Activated CD4-positive, alpha-beta T cell treated with anti-CD3 and anti-CD28 coated beads, Interleukin-2, amount 10 ng/mL, durations not matched to agents 7 days and 5 days (primary cell): ENCODE measurements at regions of chr4 and their contacts with region 1.

Region 1: DNA sequence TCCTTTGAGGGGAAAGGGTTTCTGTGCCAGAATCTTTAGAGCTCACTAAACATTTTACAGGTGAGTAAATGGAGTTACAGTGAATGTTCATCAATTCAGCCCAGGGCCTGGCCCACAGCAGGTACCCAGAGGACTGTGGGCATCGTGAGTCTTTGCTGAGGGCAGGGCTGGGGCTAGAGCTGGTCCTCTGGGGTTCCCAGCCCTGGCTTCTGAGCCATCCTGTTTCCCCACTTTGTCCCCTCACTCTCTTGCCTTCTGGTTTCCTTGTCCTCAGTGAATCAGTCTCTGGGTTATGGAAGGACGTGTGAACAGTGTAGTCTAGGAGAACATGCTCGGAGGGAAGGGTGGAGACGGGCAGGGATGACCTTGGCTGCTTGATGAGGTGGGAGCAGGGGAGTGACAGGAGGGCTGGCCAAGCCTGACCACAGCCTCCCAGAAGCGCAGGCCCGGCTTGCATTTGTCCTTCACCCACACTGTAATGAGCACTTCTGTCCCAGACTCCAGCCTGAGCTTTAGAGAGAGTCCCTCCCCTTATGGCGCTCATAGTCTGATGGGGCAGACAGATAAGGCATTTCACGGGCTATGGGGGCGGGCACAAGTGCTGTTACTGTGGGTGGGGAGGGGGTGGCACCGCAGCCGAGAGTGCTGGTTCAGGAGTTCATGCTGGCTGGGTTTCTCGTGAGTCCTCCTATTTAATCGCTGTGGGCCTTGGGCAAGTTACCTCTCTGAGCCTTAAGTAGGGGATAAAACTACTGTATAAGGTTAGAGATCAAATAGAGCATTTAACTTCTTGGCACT is 17.3 kb downstream of the TBC1D14 start:
- DNase-seq: peak; percentile 74
- H3K4me3 Mint-ChIP-seq: peak overlapping the region; percentile 66
- H3K27ac Mint-ChIP-seq: peak overlapping the region; percentile 90
- H3K4me1 Mint-ChIP-seq: peaks cover 77% of the 10 kb centered on the region
- H3K27me3 Mint-ChIP-seq: no peaks in the 10 kb centered on the region

Region 2: DNA sequence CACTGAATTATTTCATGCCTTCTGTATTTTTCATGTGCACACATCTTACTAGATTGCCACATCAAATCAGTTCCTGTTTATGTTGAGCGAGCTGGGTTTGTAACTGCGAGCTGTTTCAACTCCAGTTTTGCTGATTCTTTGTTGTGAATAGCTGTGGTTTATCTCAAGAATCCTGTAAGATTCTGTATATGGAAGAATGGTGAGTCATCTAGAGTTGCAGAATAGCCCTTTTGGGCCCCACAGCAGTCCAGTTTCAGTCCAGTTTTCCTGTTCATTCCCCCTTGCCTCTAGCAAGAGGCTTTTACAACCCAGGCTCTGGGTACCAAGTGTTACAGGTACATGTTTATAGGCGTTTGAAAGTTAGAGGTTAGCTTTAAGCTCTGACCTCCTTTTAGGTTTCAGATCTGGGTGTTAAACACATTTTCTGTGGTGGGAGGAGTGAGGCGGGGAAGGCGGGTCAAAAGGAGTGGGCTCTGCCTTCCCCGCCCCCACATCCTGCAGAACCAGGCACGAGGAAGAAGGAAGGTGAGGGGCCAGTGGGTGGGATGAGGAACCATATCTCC is 15.4 kb after region 1 on chr4:
- CTCF ChIA-PET with region 1: interaction called, 10 read pairs
- POLR2A ChIA-PET with region 1: interaction called, 3 read pairs
- DNase-seq: peak; percentile 62
- H3K4me3 Mint-ChIP-seq: peak overlapping the region; percentile 67
- H3K27ac Mint-ChIP-seq: peak overlapping the region; percentile 89
- H3K4me1 Mint-ChIP-seq: peaks cover 57% of the 10 kb centered on the region
- H3K27me3 Mint-ChIP-seq: no peaks in the 10 kb centered on the region

Region 3: DNA sequence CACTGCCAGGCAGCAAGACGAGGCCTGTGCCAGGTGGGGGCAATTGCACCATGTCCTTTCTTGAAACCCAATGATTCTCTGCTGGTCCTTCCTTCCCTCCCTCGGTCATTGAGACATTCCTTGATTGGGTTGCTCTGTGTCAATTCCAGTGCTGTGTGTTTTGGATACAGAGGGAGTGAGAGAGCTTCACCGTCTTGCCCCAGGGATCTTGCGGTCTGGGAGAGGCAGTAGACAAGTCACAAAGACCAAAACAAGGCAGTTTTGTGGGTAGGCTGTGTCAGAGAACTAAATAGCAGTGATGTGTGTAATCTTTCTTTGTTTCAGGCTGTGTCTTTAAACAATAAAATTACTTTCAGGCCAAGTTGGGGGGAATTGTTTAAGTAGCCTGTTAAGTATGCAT is 77.5 kb after region 1 on chr4:
- CTCF ChIA-PET with region 1: no interaction called
- POLR2A ChIA-PET with region 1: no interaction called
- DNase-seq: no peak
- H3K4me3 Mint-ChIP-seq: no peak overlapping the region
- H3K27ac Mint-ChIP-seq: no peak overlapping the region
- H3K4me1 Mint-ChIP-seq: peaks cover 21% of the 10 kb centered on the region
- H3K27me3 Mint-ChIP-seq: no peaks in the 10 kb centered on the region